ENCODE measurements at regions of chr3 and their contacts with region 1.

Region 1: DNA sequence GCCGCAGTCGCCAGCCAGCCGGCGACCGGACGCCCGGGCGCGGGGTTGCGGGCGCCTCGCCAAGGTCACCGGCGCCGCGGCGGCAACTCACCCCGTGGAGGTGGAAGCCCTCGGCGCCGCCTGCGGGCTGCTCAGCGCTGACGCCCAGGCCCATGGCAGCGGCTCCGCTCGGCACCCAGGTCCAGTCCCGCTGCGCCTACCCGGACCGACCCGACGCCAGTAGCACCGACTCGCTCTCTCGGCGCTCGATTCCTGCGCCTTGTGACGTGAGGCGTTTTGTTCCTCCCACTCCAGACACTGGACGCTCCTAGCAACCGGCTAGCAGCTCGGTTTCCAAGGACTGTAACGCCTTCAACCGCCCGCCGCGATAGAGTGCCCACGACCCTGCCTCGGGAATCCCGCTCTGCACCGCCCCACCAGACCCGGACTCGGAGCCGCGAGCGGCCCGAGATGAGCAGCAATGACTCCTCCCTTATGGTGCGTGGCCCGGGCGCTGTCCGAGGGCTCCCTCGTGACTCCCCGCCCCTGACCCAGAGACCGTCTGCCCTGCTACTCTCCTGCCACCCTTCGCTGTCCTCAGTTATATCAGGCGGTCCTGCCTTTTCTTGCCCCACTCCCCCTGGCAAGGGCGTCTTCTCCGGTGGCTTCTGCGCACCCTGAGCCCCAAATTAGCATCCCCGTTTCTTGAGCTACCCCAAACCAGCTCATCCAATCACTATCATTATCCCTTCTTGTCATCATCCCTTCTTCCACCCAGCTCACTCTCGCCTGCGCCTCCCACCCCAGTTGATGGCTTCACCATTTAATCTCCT is at the starts of genes GORASP1 and TTC21A:
- DNase-seq: peak; percentile 86 to 92 (median 90)
- H3K4me3 ChIP-seq: peak within 1 kb of the TSS; percentile 88
- H3K27ac ChIP-seq: peak within 1 kb of the TSS; percentile 88 to 96
- H3K4me1 ChIP-seq: peaks cover 4% of the 10 kb centered on the region
- H3K27me3 ChIP-seq: no peaks in the 10 kb centered on the region
- CTCF ChIP-seq: peak in 2 of 3 donors; percentile 2 to 24
- EP300 ChIP-seq: no peak
- POLR2A ChIP-seq: peak; percentile 87
- total RNA-seq, gene GORASP1: 38.0 to 54.5 (median 47.8) TPM
- total RNA-seq, gene TTC21A: 4.8 to 21.4 (median 9.1) TPM

Region 2: GRCh38 chr3:39146984-39147591 is 39.5 kb after region 1 on chr3:
- intact Hi-C with region 1: loop called in 1 of 4 experiments (anchors 5 kb)
- DNase-seq: peak; percentile 80 to 84 (median 80)
- H3K4me3 ChIP-seq: no peak overlapping the region
- H3K27ac ChIP-seq: peak overlapping the region in 1 of 2 donors; percentile 56
- H3K4me1 ChIP-seq: peaks cover 36% of the 10 kb centered on the region
- H3K27me3 ChIP-seq: no peaks in the 10 kb centered on the region
- CTCF ChIP-seq: no peak
- EP300 ChIP-seq: no peak
- POLR2A ChIP-seq: no peak

Region 3: DNA sequence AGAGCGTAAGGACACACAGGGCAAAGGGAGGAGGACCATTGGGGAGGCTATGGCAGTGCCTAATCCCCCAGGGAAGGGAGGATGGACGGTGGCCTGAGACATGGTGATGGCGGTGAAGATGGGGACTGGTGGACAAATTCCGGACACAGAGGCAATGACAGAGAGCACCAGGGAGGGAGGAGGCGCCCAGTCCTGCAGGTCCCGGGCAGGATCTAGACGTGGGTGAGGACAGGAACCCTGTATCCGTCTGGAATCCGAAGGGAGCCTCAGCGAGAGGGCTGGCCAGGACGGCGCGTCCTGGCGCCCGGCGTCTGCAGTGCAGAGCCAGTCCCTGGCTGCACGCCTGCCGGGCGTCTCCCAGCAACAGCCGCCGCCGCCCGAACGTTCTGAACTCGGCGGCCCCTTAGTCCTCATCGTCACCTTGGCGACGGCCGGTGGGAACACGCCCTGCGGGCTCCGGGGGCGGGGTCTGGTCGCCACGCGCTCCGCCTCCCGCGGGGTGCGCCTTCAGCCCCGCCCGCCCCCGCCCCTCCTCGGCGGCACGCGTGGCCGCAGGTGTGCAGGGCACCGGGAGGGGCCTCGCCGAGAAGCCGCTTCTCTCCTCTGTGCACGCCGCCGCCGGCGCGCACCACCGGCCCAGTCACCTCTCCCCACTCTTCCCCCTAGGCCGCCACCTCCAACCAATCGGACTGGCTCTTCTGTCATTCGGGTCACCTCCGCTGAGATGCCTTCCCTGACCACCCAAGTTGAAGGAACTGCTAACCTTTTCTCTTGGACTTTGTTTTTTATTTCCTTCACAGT is 73.2 kb after region 1 on chr3:
- intact Hi-C with region 1: loop called in 1 of 4 experiments (anchors 5 kb)
- DNase-seq: peak; percentile 90 to 95 (median 92)
- H3K4me3 ChIP-seq: peak overlapping the region; percentile 32
- H3K27ac ChIP-seq: peak overlapping the region in 1 of 2 donors; percentile 68
- H3K4me1 ChIP-seq: peaks cover 7% of the 10 kb centered on the region
- H3K27me3 ChIP-seq: no peaks in the 10 kb centered on the region
- CTCF ChIP-seq: peak in 1 of 3 donors; percentile 18
- EP300 ChIP-seq: no peak
- POLR2A ChIP-seq: peak; percentile 21

Region 4: DNA sequence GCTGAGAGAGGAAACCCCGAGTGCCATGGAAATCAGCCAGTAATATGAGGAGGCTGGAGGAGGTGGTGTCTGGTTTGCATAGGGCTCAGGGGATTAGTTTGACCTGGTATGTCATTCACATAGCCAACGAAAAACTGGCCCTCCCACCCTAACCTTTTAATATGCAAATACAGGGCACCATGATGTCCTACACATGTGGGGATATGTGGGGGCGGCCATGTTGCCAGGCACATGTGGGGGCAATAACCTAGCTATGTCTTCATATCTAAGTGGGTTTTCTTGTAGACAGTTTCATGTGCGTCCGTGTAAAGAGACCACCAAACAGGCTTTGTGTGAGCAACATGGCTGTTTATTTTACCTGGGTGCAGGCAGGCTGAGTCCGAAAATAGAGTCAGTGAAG is 469.9 kb after region 1 on chr3:
- intact Hi-C with region 1: no loop called
- DNase-seq: no peak
- H3K4me3 ChIP-seq: no peak overlapping the region
- H3K27ac ChIP-seq: no peak overlapping the region
- H3K4me1 ChIP-seq: no peaks in the 10 kb centered on the region
- H3K27me3 ChIP-seq: no peaks in the 10 kb centered on the region
- CTCF ChIP-seq: no peak
- EP300 ChIP-seq: no peak
- POLR2A ChIP-seq: no peak

Measured in ovary (tissue), 10 donors.